ENCODE measurements at regions of chr2 and their contacts with region 1.

Region 1: GRCh38 chr2:151638191-151638933 is 95.9 kb downstream of the NEB start:
- DNase-seq: peak; percentile 4
- ATAC-seq: peak; percentile 80
- H3K4me3 ChIP-seq: no peak overlapping the region
- H3K27ac ChIP-seq: no peak overlapping the region
- H3K4me1 ChIP-seq: peaks cover 16% of the 10 kb centered on the region
- H3K27me3 ChIP-seq: no peaks in the 10 kb centered on the region
- CTCF ChIP-seq: no peak
- EP300 ChIP-seq: no peak
- POLR2A ChIP-seq: no peak
- RAD21 ChIP-seq: no peak

Region 2: GRCh38 chr2:151518802-151519201 is 119.6 kb before region 1 on chr2:
- CTCF ChIA-PET with region 1: no interaction called
- POLR2A ChIA-PET with region 1: no interaction called
- RAD21 ChIA-PET with region 1: no interaction called
- SMC1A ChIA-PET with region 1: no interaction called
- in situ Hi-C with region 1: no loop called
- intact Hi-C with region 1: no loop called
- DNase-seq: no peak
- ATAC-seq: no peak
- H3K4me3 ChIP-seq: no peak overlapping the region
- H3K27ac ChIP-seq: no peak overlapping the region
- H3K4me1 ChIP-seq: no peaks in the 10 kb centered on the region
- H3K27me3 ChIP-seq: no peaks in the 10 kb centered on the region
- CTCF ChIP-seq: no peak
- EP300 ChIP-seq: no peak
- POLR2A ChIP-seq: no peak
- RAD21 ChIP-seq: no peak

Region 3: DNA sequence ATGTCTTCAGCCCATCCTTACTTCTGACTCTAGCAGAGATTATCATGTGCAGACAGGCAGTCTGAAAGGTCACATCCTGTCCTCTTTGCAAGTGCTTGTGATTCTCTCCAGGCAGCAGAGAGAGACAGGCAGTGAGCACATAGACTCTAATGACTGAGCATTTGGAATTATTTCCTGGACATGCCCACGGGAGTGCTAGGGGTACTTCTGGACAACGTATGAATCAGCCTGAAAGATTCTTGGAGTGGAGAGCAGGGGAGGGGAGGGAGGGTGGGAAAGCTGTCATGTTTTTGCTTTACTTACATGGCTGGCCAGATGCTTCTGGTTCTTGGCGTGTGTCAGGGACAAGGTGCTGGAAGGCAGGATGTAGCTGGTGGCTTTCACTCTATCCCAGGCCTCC is 78.1 kb before region 1 on chr2:
- CTCF ChIA-PET with region 1: no interaction called
- POLR2A ChIA-PET with region 1: no interaction called
- RAD21 ChIA-PET with region 1: no interaction called
- SMC1A ChIA-PET with region 1: no interaction called
- in situ Hi-C with region 1: no loop called
- intact Hi-C with region 1: loop called (anchors 10 kb)
- DNase-seq: no peak
- ATAC-seq: no peak
- H3K4me3 ChIP-seq: no peak overlapping the region
- H3K27ac ChIP-seq: no peak overlapping the region
- H3K4me1 ChIP-seq: no peaks in the 10 kb centered on the region
- H3K27me3 ChIP-seq: no peaks in the 10 kb centered on the region; a peak in 1 of 4 replicates
- CTCF ChIP-seq: no peak
- EP300 ChIP-seq: no peak
- POLR2A ChIP-seq: no peak
- RAD21 ChIP-seq: no peak

Measured in GM12878 (cell line).